ENCODE measurements at regions of chr18 and their contacts with region 1.

Region 1: GRCh38 chr18:31469629-31470028 is 22.1 kb downstream of the DSG3 start:
- DNase-seq: no peak
- ATAC-seq: no peak
- H3K4me3 ChIP-seq: no peak overlapping the region
- H3K27ac ChIP-seq: no peak overlapping the region
- H3K4me1 ChIP-seq: no peaks in the 10 kb centered on the region
- H3K27me3 ChIP-seq: no peaks in the 10 kb centered on the region; the same call in 1 of the 2 replicates
- CTCF ChIP-seq: no peak
- POLR2A ChIP-seq: no peak
- RAD21 ChIP-seq: no peak

Region 2: DNA sequence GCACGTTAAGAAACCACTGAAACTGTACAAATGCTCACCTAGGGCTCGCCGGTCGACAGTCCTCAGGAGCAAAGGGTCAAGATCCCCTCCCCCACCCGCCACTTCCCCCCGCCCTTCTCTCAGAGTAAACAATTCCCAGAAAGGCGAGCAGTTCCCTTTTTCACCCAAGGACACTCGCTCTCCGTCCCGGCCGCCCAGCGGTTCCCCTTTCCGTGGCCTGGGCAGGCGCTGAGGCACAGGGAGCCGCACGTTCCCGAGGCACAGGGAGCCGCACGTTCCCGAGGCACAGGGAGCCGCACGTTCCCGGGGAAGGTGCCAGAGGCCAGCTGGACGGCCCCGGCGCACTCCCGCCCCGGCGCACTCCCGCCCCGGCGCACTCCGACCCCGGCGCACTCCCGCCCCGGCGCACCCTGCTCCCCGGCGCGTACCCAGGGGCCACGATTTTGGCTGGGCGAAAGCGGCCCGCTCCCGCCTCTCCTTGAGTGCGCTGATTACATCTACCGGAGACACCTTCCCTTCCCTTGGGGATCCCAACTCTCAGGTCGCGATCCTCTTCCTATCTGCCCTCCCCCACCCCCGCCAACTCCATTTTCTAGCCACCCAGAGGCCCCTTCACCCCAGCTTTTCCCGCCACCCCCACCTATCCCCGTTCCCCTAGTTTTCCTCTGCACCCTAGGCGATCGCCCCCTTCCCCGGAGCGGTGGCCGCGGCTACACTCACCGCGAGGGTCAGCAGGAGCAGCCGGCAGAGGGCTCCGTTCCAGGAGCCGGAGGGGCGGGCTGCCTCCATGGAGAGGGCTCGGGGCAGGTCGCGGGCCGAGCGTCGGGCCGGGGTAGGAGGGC is 368.2 kb before region 1 on chr18:
- CTCF ChIA-PET with region 1: no interaction called
- POLR2A ChIA-PET with region 1: no interaction called
- dilution Hi-C with region 1: no loop called
- in situ Hi-C with region 1: no loop called
- intact Hi-C with region 1: no loop called
- DNase-seq: no peak
- ATAC-seq: no peak
- H3K4me3 ChIP-seq: no peak overlapping the region
- H3K27ac ChIP-seq: no peak overlapping the region
- H3K4me1 ChIP-seq: no peaks in the 10 kb centered on the region
- H3K27me3 ChIP-seq: peaks cover 13% of the 10 kb centered on the region
- CTCF ChIP-seq: no peak
- POLR2A ChIP-seq: no peak
- RAD21 ChIP-seq: no peak

Region 3: GRCh38 chr18:31526374-31526773 is 56.7 kb after region 1 on chr18:
- CTCF ChIA-PET with region 1: no interaction called
- POLR2A ChIA-PET with region 1: no interaction called
- dilution Hi-C with region 1: no loop called
- in situ Hi-C with region 1: loop called (anchors 10 kb)
- intact Hi-C with region 1: no loop called
- DNase-seq: no peak
- ATAC-seq: no peak
- H3K4me3 ChIP-seq: no peak overlapping the region
- H3K27ac ChIP-seq: no peak overlapping the region
- H3K4me1 ChIP-seq: no peaks in the 10 kb centered on the region
- H3K27me3 ChIP-seq: no peaks in the 10 kb centered on the region
- CTCF ChIP-seq: no peak
- POLR2A ChIP-seq: no peak
- RAD21 ChIP-seq: no peak